MCF 10A (cell line): ENCODE measurements at regions of chr20 and their contacts with region 1.

Region 1: GRCh38 chr20:62887147-62887859 is 25.7 kb upstream of the TCFL5 start:
- DNase-seq: no peak
- H3K4me3 Mint-ChIP-seq: no peak overlapping the region
- H3K27ac Mint-ChIP-seq: no peak overlapping the region
- H3K4me1 Mint-ChIP-seq: no peaks in the 10 kb centered on the region
- H3K27me3 Mint-ChIP-seq: no peaks in the 10 kb centered on the region
- CTCF ChIP-seq: no peak

Region 2: GRCh38 chr20:62776692-62777527 is 110.4 kb before region 1 on chr20:
- CTCF ChIA-PET with region 1: no interaction called
- POLR2A ChIA-PET with region 1: no interaction called
- intact Hi-C with region 1: no loop called
- DNase-seq: peak; percentile 79
- H3K4me3 Mint-ChIP-seq: peak overlapping the region; percentile 11
- H3K27ac Mint-ChIP-seq: peak overlapping the region; percentile 2
- H3K4me1 Mint-ChIP-seq: peaks cover 35% of the 10 kb centered on the region
- H3K27me3 Mint-ChIP-seq: no peaks in the 10 kb centered on the region
- CTCF ChIP-seq: no peak

Region 3: DNA sequence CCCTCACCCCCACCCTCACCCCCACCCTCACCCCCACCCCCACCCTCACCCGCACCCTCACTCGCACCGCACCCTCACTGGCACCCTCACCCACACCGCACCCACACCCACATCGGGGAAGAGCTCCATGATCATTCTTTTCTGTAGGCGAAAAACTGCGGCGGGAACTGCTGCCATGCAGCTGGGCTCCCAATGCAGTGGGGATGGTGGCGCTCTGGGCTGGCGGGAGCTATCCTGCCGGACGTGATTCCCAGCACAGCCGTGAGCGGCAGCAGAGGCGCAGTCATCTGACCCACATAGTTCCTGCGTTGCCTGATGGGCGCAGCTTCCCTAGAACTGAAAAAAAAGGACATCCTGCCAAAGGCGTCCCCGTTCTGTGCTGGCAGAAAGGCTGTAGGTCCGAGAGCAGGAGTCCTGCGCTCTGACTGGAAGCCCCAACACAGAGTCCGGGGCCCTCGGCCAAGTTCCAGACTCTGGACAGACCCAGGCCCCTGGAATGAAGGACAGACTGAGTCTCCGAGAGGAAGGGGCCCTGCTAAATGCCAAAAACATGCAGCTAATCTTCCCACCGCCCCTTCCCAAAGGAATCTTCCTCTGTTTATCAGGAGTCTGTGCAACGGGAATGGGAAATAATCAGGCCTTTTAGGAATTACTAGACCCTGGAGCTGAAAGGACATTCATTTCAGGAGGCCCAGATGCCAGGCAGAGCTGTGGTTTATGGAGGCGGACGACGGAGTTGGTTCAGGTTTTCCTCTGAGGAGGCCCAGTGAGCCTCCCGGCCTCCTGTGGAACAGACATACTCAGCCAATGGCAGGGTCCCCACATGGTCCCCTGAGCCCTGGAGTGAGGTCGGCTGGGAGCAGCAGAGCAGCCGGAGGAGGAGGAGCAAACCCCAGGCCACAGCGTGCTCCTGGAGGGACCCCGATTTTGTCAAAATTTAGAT is 11.6 kb before region 1 on chr20:
- CTCF ChIA-PET with region 1: interaction called, 9 read pairs
- POLR2A ChIA-PET with region 1: interaction called, 11 read pairs
- intact Hi-C with region 1: no loop called
- DNase-seq: peak; percentile 82
- H3K4me3 Mint-ChIP-seq: peak overlapping the region; percentile 40
- H3K27ac Mint-ChIP-seq: peak overlapping the region; percentile 16
- H3K4me1 Mint-ChIP-seq: peaks cover 6% of the 10 kb centered on the region
- H3K27me3 Mint-ChIP-seq: no peaks in the 10 kb centered on the region
- CTCF ChIP-seq: peak; percentile 27